Endothelial cell of umbilical vein (primary cell): ENCODE measurements at regions of chr17 and their contacts with region 1.

Region 1: DNA sequence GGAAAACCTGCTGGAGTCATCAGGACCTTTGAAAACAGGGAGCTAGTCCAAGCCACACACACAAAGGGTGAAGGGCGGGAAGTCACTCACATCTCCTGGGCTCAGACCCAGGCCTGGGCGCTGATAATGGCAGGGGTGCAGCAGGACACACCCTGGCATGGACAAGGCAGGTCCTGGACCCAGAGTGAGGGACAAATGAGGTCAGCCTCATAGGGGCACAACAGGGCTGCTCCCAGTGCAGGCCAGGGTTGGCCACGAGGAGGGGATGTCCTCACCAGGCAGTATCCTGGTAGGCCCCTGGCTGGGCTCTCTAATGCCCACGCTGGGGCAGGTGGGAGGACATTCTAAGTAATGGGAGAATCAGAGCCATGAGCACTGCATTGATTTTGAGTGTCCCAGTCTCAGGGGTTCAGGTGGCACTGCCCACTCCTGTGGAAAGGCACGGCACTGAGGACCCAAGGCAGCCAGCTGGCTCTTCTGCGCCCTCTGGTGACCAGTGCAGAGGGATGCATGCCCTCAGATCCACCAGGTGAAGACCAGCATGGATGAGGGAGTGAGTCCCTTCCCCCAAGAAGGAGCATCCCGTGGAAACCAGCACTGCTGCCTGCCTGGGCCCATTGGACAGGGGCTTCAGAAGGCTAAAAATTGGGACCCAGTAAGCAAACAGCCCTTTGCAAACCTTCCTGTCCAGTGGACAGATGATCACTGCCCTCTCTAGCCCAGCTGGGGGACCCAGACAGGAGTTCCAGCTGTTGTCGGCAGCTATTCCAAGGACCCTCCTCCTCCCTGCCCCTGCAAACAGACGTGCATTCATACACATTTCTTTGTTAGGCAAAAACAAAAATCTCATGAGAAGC is 23.4 kb upstream of the SREBF1 start:
- DNase-seq: peak; percentile 59
- H3K4me3 ChIP-seq: no peak overlapping the region
- H3K27ac ChIP-seq: no peak overlapping the region
- H3K4me1 ChIP-seq: no peaks in the 10 kb centered on the region
- H3K27me3 ChIP-seq: no peaks in the 10 kb centered on the region
- CTCF ChIP-seq: peak; percentile 88 to 97
- POLR2A ChIP-seq: no peak

Region 2: GRCh38 chr17:17729620-17730249 is 130.4 kb before region 1 on chr17:
- CTCF ChIA-PET with region 1: no interaction called
- POLR2A ChIA-PET with region 1: no interaction called
- dilution Hi-C with region 1: no loop called
- intact Hi-C with region 1: no loop called
- DNase-seq: no peak
- H3K4me3 ChIP-seq: no peak overlapping the region
- H3K27ac ChIP-seq: no peak overlapping the region
- H3K4me1 ChIP-seq: peaks cover 24% of the 10 kb centered on the region
- H3K27me3 ChIP-seq: no peaks in the 10 kb centered on the region
- CTCF ChIP-seq: peak; percentile 28 to 49
- POLR2A ChIP-seq: no peak

Region 3: DNA sequence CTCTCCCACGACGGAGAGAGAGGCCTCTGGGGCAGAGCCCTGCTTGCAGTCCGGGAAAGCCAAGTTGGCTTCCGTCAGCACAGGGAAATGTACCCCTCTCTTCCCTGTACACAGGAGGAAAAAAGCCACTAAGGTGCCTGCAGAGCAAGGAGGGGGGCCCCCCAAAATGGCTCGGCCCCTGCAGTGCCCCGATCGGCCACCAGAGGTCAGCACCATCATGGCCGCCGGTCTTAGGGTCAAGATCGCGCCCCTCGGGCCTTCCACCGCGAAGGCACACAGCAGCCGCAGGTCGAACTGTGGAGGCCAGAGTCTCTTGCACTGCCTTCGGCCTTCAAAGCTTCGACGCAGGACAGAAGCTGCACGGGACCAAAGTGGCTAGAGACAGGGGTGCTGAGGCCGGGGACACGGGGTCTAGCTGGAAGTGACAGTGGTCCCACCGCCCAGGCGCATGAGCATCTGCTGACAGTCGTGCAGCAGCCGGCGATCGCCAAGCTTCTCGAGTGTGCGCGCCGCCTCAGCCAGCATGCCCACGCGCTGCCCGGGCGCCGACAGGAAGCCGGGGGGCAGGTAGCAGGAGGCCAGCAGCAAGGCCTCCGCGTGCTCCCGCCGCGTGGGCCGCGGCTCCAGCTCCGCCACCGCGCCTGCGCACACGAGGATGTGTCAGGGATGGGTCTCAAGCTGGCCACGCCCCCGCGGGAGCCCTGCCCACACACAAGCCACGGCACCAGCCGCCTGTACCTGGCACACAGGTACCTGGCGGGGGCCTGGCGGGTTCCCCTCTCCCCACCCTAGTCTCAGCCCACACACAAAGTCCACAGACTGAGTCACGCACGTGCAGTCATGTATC is 47.7 kb before region 1 on chr17:
- CTCF ChIA-PET with region 1: interaction called, 68 read pairs
- POLR2A ChIA-PET with region 1: no interaction called
- dilution Hi-C with region 1: no loop called
- intact Hi-C with region 1: loop called (anchors 1 kb)
- DNase-seq: peak; percentile 68
- H3K4me3 ChIP-seq: no peak overlapping the region
- H3K27ac ChIP-seq: no peak overlapping the region
- H3K4me1 ChIP-seq: peaks cover 3% of the 10 kb centered on the region
- H3K27me3 ChIP-seq: no peaks in the 10 kb centered on the region
- CTCF ChIP-seq: peak; percentile 95 to 96
- POLR2A ChIP-seq: no peak

Region 4: GRCh38 chr17:17849845-17850373 is 10.2 kb before region 1 on chr17:
- CTCF ChIA-PET with region 1: interaction called, 23 read pairs
- POLR2A ChIA-PET with region 1: interaction called, 4 read pairs
- dilution Hi-C with region 1: no loop called
- intact Hi-C with region 1: no loop called
- DNase-seq: peak; percentile 46
- H3K4me3 ChIP-seq: no peak overlapping the region
- H3K27ac ChIP-seq: no peak overlapping the region
- H3K4me1 ChIP-seq: peaks cover 7% of the 10 kb centered on the region
- H3K27me3 ChIP-seq: no peaks in the 10 kb centered on the region
- CTCF ChIP-seq: peak; percentile 23 to 38
- POLR2A ChIP-seq: no peak

Region 5: GRCh38 chr17:17942846-17943245 is 82.7 kb after region 1 on chr17:
- CTCF ChIA-PET with region 1: no interaction called
- POLR2A ChIA-PET with region 1: no interaction called
- dilution Hi-C with region 1: no loop called
- intact Hi-C with region 1: no loop called
- DNase-seq: peak; percentile 45
- H3K4me3 ChIP-seq: peak overlapping the region in 1 of 3 experiments; percentile 29
- H3K27ac ChIP-seq: peak overlapping the region; percentile 61
- H3K4me1 ChIP-seq: peaks cover 38% of the 10 kb centered on the region
- H3K27me3 ChIP-seq: no peaks in the 10 kb centered on the region
- CTCF ChIP-seq: no peak
- POLR2A ChIP-seq: no peak

Region 6: GRCh38 chr17:18025945-18026776 is 166.0 kb after region 1 on chr17:
- CTCF ChIA-PET with region 1: no interaction called
- POLR2A ChIA-PET with region 1: no interaction called
- dilution Hi-C with region 1: no loop called
- intact Hi-C with region 1: no loop called
- DNase-seq: peak; percentile 29
- H3K4me3 ChIP-seq: no peak overlapping the region
- H3K27ac ChIP-seq: no peak overlapping the region
- H3K4me1 ChIP-seq: no peaks in the 10 kb centered on the region
- H3K27me3 ChIP-seq: no peaks in the 10 kb centered on the region
- CTCF ChIP-seq: no peak
- POLR2A ChIP-seq: no peak

Region 7: DNA sequence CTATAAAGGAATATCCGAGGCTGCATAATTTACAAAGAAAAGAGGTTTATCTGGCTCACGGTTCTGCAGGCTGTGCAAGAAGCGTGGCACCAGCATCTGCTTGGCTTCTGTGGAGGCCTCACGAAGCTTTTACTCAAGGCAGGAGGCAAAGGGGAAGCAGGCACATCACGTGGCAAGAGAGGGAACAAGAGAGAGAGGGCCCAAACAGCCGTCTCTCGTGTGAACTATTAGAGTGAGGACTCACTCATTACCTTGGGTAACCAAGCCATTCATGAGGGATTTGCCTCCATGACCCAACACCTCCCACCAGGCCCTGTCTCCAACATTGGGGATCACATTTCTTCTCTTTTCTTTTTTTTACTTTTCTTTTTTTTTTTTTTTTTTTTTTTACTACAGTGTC is 316.0 kb after region 1 on chr17:
- CTCF ChIA-PET with region 1: no interaction called
- POLR2A ChIA-PET with region 1: no interaction called
- dilution Hi-C with region 1: no loop called
- intact Hi-C with region 1: no loop called
- DNase-seq: no peak
- H3K4me3 ChIP-seq: no peak overlapping the region
- H3K27ac ChIP-seq: no peak overlapping the region
- H3K4me1 ChIP-seq: no peaks in the 10 kb centered on the region
- H3K27me3 ChIP-seq: no peaks in the 10 kb centered on the region
- CTCF ChIP-seq: no peak
- POLR2A ChIP-seq: no peak